ENCODE measurements at regions of chr17 and their contacts with region 1.

Region 1: DNA sequence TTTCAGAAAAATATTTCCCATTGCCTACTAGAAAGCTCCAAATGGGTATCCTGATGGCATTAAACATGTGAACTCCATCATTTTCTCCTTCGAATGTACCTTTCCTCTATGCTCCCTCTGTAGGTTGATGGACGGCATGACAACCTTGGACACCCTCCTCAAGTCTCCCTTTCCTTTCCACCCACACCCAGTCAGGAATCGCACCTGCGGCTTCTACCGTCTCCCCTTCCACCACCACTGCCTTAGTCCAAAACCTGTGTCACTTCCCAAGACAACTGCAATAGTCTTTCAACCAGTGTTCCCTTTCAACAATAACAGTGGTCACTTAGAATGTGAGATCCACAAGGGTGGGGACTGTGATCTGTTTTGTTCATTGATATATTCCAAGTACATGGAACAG is 233.1 kb upstream of the AXIN2 start:
- DNase-seq: no peak
- H3K4me3 ChIP-seq: no peak overlapping the region
- H3K27ac ChIP-seq: no peak overlapping the region
- H3K4me1 ChIP-seq: peaks cover 0 to 17% (median 2%) of the 10 kb centered on the region in 4 donors
- H3K27me3 ChIP-seq: no peaks in the 10 kb centered on the region
- CTCF ChIP-seq: peak; percentile 21 to 30 (median 27)
- EP300 ChIP-seq: no peak
- POLR2A ChIP-seq: no peak

Region 2: DNA sequence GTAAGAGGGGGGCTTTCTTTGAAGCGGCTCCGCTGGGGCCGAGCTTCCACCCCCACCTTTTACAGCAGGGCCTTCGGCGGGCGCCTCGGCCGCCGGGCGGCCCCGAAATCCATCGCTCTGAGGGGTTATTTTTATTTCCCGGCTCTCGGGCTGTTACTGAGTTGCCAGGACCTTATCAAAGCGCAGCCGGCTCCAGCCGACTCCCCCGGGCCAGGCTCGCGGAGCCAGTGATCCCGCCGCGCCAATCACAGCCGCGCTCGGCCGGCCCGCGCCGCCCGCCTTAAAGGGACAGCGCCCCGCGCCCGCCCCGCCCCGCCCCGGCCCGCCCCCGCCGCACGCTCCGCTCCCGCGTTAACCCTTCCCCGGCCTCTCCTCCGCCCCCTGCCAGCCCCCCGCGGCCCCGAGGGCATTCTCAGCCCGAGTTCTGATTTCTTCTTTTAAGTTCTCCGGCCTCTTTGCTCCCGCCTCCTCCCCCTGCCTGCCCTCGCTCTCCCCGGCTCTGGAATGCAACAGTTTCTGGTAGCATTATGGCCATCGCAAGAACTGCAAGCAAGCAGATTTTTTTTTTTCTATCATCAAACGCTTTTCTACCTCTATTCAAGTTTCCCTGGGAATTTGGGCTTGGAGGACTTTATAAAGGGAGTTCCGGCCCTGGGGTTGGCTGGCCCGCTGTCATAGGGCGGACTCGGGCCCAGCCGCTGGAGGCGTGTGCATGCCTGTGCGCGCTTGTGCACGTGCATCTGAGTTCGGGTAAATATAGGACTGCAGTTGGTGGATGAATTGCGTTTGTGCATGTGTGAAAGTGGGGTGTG is 233.0 kb before region 1 on chr17 and contains the start of gene AXIN2:
- intact Hi-C with region 1: loop called (anchors 10 kb)
- DNase-seq: no peak
- H3K4me3 ChIP-seq: no peak within 1 kb of the TSS
- H3K27ac ChIP-seq: no peak within 1 kb of the TSS
- H3K4me1 ChIP-seq: peaks cover 27 to 61% (median 29%) of the 10 kb centered on the region in 4 donors
- H3K27me3 ChIP-seq: no peaks in the 10 kb centered on the region
- CTCF ChIP-seq: peak in 2 of 3 experiments; percentile 24 to 47
- EP300 ChIP-seq: no peak
- POLR2A ChIP-seq: no peak
- total RNA-seq, gene AXIN2: 17.2 to 63.4 (median 49.3) TPM

Region 3: GRCh38 chr17:65627891-65628659 is 166.5 kb before region 1 on chr17:
- intact Hi-C with region 1: loop called (anchors 10 kb)
- DNase-seq: no peak
- H3K4me3 ChIP-seq: peak overlapping the region in 2 of 4 donors; percentile 5 to 7
- H3K27ac ChIP-seq: peak overlapping the region; percentile 54 to 66 (median 62)
- H3K4me1 ChIP-seq: peaks cover 0 to 23% (median 18%) of the 10 kb centered on the region in 4 donors
- H3K27me3 ChIP-seq: no peaks in the 10 kb centered on the region
- CTCF ChIP-seq: no peak
- EP300 ChIP-seq: no peak
- POLR2A ChIP-seq: no peak